ENCODE measurements at regions of chr5 and their contacts with region 1.

Region 1: GRCh38 chr5:119386596-119387344 is 31.0 kb downstream of the TNFAIP8 start:
- DNase-seq: no peak
- H3K4me3 ChIP-seq: no peak overlapping the region
- H3K27ac ChIP-seq: no peak overlapping the region
- H3K4me1 ChIP-seq: no peaks in the 10 kb centered on the region
- H3K27me3 ChIP-seq: no peaks in the 10 kb centered on the region
- CTCF ChIP-seq: no peak

Region 2: GRCh38 chr5:117761186-117761585 is 1625.6 kb before region 1 on chr5:
- CTCF ChIA-PET with region 1: interaction called, 11 read pairs
- POLR2A ChIA-PET with region 1: no interaction called
- intact Hi-C with region 1: no loop called
- DNase-seq: no peak
- H3K4me3 ChIP-seq: no peak overlapping the region
- H3K27ac ChIP-seq: no peak overlapping the region
- H3K4me1 ChIP-seq: no peaks in the 10 kb centered on the region
- H3K27me3 ChIP-seq: no peaks in the 10 kb centered on the region
- CTCF ChIP-seq: no peak

Region 3: DNA sequence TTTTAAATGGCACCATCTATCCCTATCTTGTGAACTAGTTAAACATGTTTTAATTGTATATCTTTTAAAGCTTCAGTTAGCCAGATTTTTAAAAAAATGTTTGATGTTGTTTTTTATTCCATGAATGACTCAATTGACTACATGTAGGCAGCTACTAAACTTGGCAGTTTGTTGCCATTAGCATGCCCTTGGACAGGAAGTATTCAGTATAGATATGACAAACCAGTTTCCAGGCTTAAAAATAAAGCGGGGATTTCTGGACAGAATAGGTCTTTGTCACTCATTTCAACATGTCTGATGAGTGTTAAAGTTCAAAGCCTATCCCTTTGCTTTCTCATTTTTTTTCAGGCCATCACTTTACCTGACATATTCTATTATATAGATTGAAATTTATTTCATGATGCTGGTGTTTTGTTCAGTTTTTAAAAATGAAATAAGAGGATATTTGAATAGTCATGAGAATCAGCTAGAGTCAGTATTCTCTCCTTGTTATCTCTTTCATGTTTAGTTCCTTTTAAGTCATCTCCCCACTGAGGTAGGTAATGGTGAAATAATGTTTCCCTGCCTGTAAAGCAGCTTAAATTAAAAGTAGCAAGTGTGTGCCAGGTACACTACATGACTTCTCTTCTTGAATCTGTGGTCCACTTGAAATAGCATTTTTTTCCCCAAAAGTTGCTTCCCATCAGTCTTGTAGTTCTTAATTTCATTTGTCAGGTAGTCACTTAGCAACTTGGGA is 19.1 kb before region 1 on chr5:
- CTCF ChIA-PET with region 1: no interaction called
- POLR2A ChIA-PET with region 1: interaction called, 23 read pairs
- intact Hi-C with region 1: no loop called
- DNase-seq: no peak
- H3K4me3 ChIP-seq: no peak overlapping the region
- H3K27ac ChIP-seq: no peak overlapping the region
- H3K4me1 ChIP-seq: peaks cover 30% of the 10 kb centered on the region
- H3K27me3 ChIP-seq: no peaks in the 10 kb centered on the region
- CTCF ChIP-seq: no peak

Measured in PC-9 (cell line).